Common myeloid progenitor, CD34-positive (primary cell): ENCODE measurements at regions of chr15 and their contacts with region 1.

Region 1: DNA sequence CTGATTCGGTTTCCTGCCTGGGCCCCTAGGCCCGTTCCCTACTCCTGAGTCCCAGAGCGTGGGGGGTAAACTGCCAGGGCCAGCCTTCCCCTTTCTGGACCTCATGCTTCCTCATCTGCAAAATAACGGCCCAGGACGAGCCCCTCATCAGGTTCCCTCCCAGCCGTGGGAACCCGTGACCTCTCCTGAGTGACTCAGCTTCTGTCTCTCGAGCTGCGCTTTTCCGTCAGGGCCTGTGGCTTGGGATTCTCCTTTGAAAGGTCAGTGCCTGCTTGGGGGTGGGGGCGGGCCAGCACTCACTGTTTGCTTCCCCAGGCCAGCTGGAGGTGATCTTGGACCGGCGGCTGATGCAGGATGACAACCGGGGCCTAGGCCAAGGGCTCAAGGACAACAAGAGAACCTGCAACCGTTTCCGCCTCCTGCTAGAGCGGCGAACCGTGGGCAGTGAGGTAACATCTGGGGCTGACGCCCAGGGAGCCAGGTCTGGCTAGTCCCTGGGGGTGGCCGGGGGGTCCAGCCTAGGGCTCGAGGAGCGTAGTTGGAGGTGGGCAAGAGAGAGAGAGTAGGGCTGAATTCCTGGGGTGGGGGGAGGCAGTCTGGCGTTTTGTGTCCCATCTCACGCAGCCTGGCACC is 12.8 kb downstream of the MAN2A2 start:
- DNase-seq: peak; percentile 81 to 93 (median 91)
- H3K4me3 ChIP-seq: peak overlapping the region in 5 of 7 experiments; percentile 44 to 68 (median 61)
- H3K27ac ChIP-seq: peak overlapping the region; percentile 80 to 85
- H3K4me1 ChIP-seq: peaks cover 11 to 40% (median 33%) of the 10 kb centered on the region in 4 experiments
- H3K27me3 ChIP-seq: no peaks in the 10 kb centered on the region

Region 2: DNA sequence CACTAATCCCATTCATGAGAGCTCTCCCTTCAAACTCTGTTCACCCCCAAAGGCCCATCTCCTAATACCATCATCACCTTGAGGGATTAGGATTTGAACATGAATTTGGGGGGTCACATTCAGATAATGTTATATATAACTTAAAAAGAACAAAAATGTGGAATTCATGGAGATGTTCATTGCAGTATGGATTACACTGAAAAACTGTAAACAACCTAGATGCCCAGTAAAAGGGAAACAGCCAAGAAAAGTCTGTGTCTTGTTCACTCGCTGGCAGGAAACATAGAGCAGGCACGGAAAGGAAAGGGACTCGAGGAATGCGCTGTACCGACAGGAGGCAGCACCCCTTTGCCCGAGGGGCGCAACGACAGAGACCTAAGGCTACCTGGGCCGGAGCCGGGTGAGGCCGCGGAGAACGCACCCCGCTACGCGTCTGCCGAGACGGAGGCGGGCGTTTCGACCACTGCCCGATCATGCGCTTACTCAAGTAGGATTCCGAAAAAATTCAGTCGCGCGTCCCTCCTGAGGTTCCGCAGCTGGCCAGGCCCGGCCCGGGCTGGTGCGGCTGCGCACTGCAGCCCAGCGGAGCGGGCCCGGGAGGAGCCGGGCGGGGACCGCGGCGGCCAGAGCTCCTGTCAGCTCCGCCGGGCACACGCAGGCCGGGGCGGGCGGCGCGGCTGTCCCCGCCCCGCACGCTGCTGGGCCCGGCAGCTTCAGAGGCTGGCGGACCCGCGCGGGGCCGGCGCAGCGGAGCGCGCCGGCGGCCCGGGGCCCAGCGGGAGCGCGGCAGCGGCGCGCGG is 13.7 kb before region 1 on chr15:
- CTCF ChIA-PET with region 1: interaction called, 96 read pairs
- POLR2A ChIA-PET with region 1: interaction called, 5 read pairs
- DNase-seq: peak; percentile 74 to 82 (median 80)
- H3K4me3 ChIP-seq: peak overlapping the region; percentile 69 to 85 (median 79)
- H3K27ac ChIP-seq: peak overlapping the region; percentile 85 to 93
- H3K4me1 ChIP-seq: peaks cover 2 to 24% (median 20%) of the 10 kb centered on the region in 4 experiments
- H3K27me3 ChIP-seq: no peaks in the 10 kb centered on the region

Region 3: GRCh38 chr15:91049378-91050127 is 133.6 kb after region 1 on chr15:
- CTCF ChIA-PET with region 1: no interaction called
- POLR2A ChIA-PET with region 1: no interaction called
- DNase-seq: peak; percentile 62 to 80 (median 75)
- H3K4me3 ChIP-seq: no peak overlapping the region
- H3K27ac ChIP-seq: no peak overlapping the region
- H3K4me1 ChIP-seq: peaks cover 0 to 9% (median 6%) of the 10 kb centered on the region in 4 experiments
- H3K27me3 ChIP-seq: peaks cover 0 to 9% (median 3%) of the 10 kb centered on the region in 5 experiments